Activated CD4-positive, alpha-beta memory T cell treated with anti-CD3 and anti-CD28 coated beads for 36 hours (primary cell): ENCODE measurements at regions of chr11 and their contacts with region 1.

Region 1: DNA sequence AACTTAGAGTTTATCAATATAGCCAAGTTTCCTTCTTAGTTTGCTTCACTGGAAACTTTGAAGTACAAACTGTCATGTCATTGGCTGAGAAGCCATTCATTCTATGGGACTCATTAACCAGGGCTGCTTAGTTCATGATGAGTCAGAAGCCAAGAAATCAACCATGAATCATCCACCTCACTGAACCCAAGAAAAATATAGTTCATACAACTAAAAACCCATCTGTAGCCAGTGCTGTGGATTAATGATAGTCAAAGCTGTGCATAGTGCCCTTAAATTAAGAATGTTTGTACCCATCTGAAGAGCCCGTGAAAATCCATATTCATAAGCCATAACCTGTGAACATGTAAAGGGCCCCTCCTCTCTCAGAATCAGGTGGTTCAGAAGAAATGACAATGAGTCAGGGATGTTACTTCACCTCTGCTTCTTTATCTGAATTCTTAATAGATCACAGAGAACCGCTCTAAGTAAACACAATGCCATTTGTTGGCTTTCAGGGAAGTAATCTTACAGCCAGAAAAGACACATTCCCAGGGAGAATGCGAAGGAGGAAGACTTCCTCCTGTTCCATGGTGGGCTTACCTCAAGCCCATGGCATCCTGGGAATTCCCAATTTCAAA is 25.4 kb downstream of the MMP20 start:
- DNase-seq: no peak
- H3K4me3 Mint-ChIP-seq: no peak overlapping the region
- H3K27ac Mint-ChIP-seq: peak overlapping the region; percentile 75
- H3K4me1 Mint-ChIP-seq: peaks cover 35% of the 10 kb centered on the region
- H3K27me3 Mint-ChIP-seq: peaks cover 1% of the 10 kb centered on the region

Region 2: GRCh38 chr11:102177974-102178631 is 421.6 kb before region 1 on chr11:
- CTCF ChIA-PET with region 1: no interaction called
- POLR2A ChIA-PET with region 1: no interaction called
- intact Hi-C with region 1: no loop called
- DNase-seq: no peak
- H3K4me3 Mint-ChIP-seq: no peak overlapping the region
- H3K27ac Mint-ChIP-seq: no peak overlapping the region
- H3K4me1 Mint-ChIP-seq: peaks cover 2% of the 10 kb centered on the region
- H3K27me3 Mint-ChIP-seq: peaks cover 2% of the 10 kb centered on the region

Region 3: DNA sequence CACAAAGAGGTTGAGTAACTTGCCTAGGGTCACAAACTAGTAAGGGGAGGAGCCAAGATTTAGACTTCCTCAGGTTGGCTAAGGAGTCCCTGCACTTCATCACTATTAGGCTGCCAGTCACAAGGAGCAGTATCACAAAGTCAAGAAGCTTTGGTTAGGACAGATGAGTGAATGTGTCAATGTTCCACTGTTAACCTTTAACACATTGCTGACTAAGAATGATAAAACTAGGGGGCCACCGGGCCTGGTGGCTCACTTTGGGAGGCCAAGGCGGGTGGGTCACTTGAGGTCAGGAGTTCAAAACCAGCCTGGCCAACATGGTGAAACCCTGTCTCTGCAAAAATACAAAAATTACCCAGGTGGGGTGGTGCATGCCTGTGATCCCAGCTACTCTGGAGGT is 179.2 kb before region 1 on chr11:
- CTCF ChIA-PET with region 1: no interaction called
- POLR2A ChIA-PET with region 1: interaction called, 4 read pairs
- intact Hi-C with region 1: loop called (anchors 5 kb)
- DNase-seq: peak; percentile 67
- H3K4me3 Mint-ChIP-seq: no peak overlapping the region
- H3K27ac Mint-ChIP-seq: peak overlapping the region; percentile 52
- H3K4me1 Mint-ChIP-seq: peaks cover 93% of the 10 kb centered on the region
- H3K27me3 Mint-ChIP-seq: no peaks in the 10 kb centered on the region

Region 4: GRCh38 chr11:102580185-102580951 is 19.4 kb before region 1 on chr11:
- CTCF ChIA-PET with region 1: no interaction called
- POLR2A ChIA-PET with region 1: no interaction called
- intact Hi-C with region 1: loop called (anchors 1 kb)
- DNase-seq: peak; percentile 33
- H3K4me3 Mint-ChIP-seq: no peak overlapping the region
- H3K27ac Mint-ChIP-seq: peak overlapping the region; percentile 40
- H3K4me1 Mint-ChIP-seq: peaks cover 35% of the 10 kb centered on the region
- H3K27me3 Mint-ChIP-seq: no peaks in the 10 kb centered on the region

Region 5: GRCh38 chr11:102589047-102589459 is 10.7 kb before region 1 on chr11:
- CTCF ChIA-PET with region 1: no interaction called
- POLR2A ChIA-PET with region 1: no interaction called
- intact Hi-C with region 1: loop called (anchors 1 kb)
- DNase-seq: peak; percentile 77
- H3K4me3 Mint-ChIP-seq: no peak overlapping the region
- H3K27ac Mint-ChIP-seq: peak overlapping the region; percentile 38
- H3K4me1 Mint-ChIP-seq: peaks cover 22% of the 10 kb centered on the region
- H3K27me3 Mint-ChIP-seq: peaks cover 1% of the 10 kb centered on the region

Region 6: GRCh38 chr11:102637731-102638130 is 38.0 kb after region 1 on chr11:
- CTCF ChIA-PET with region 1: no interaction called
- POLR2A ChIA-PET with region 1: no interaction called
- intact Hi-C with region 1: no loop called
- DNase-seq: no peak
- H3K4me3 Mint-ChIP-seq: no peak overlapping the region
- H3K27ac Mint-ChIP-seq: no peak overlapping the region
- H3K4me1 Mint-ChIP-seq: no peaks in the 10 kb centered on the region
- H3K27me3 Mint-ChIP-seq: peaks cover 4% of the 10 kb centered on the region

Region 7: DNA sequence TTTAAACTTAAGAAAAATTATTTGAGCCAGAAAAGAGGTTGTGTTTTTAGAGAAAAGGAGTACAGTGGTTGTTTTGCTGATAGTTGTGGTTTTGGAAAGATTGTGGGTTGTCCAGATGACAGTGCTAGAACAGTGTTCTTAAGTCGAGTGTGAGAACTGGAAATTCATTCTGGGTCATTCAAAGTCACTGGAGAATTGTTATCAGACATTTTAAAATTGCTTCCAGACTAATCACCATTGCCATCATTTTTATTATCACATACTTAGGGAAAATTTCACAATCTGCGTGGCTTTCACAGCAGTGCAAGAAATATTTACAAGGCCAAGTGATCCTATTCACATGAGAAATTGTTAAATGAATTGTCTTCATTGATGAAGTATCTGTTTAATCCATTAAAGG is 1194.5 kb after region 1 on chr11:
- CTCF ChIA-PET with region 1: no interaction called
- POLR2A ChIA-PET with region 1: no interaction called
- intact Hi-C with region 1: no loop called
- DNase-seq: no peak
- H3K4me3 Mint-ChIP-seq: no peak overlapping the region
- H3K27ac Mint-ChIP-seq: no peak overlapping the region
- H3K4me1 Mint-ChIP-seq: no peaks in the 10 kb centered on the region
- H3K27me3 Mint-ChIP-seq: no peaks in the 10 kb centered on the region